ENCODE measurements at regions of chr1 and their contacts with region 1.

Region 1: GRCh38 chr1:171300401-171300800 is 13.6 kb upstream of the FMO4 start:
- DNase-seq: no peak
- ATAC-seq: no peak
- H3K4me3 ChIP-seq: no peak overlapping the region
- H3K27ac ChIP-seq: no peak overlapping the region
- H3K4me1 ChIP-seq: no peaks in the 10 kb centered on the region
- H3K27me3 ChIP-seq: peaks cover 0 to 6% (median 0%) of the 10 kb centered on the region in 7 donors
- CTCF ChIP-seq: no peak

Region 2: GRCh38 chr1:170978371-170978910 is 322.0 kb before region 1 on chr1:
- intact Hi-C with region 1: loop called in 1 of 10 experiments (anchors 10 kb)
- DNase-seq: no peak
- ATAC-seq: peak in 1 of 8 donors; percentile 30
- H3K4me3 ChIP-seq: no peak overlapping the region
- H3K27ac ChIP-seq: no peak overlapping the region
- H3K4me1 ChIP-seq: no peaks in the 10 kb centered on the region
- H3K27me3 ChIP-seq: no peaks in the 10 kb centered on the region
- CTCF ChIP-seq: no peak